Activated B cell treated with CpG ODN at 0.5 μM for 24 hours (primary cell): ENCODE measurements at regions of chr15 and their contacts with region 1.

Region 1: DNA sequence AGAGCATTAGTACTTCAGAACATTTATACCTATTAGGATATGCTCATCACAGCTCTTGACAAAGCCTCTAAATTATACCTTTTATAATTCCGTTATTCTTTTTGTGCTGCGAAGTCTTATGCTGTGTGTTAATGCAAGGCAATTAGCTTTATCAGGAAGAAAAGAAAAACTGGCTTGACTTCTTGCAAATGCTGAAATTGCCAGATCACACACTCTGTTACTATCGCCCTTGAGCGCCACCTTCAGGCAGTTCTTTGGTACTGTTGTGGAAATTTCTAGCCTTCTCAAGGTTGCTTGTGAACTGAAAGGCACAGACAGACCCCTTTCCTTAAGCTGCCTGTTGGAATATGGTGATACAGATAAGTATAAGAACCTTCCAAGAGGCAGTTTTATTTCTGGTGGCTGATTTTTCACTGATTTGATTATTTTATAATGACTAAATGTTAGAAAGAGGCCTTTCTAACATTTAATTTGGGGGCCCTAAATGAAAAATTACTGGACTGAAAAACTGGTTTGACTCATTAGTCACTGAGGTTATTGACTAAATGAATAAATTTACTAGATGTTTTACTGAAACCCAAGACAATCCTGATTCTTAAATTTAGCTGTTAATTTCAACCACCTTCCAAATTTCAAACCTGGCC is 126.2 kb upstream of the RASGRP1 start:
- DNase-seq: peak; percentile 38
- ATAC-seq: peak; percentile 89
- H3K4me3 Mint-ChIP-seq: no peak overlapping the region
- H3K27ac Mint-ChIP-seq: no peak overlapping the region
- H3K4me1 Mint-ChIP-seq: peaks cover 14% of the 10 kb centered on the region
- H3K27me3 Mint-ChIP-seq: no peaks in the 10 kb centered on the region
- CTCF ChIP-seq: no peak

Region 2: GRCh38 chr15:37973856-37974255 is 717.0 kb before region 1 on chr15:
- CTCF ChIA-PET with region 1: no interaction called
- POLR2A ChIA-PET with region 1: no interaction called
- intact Hi-C with region 1: no loop called
- DNase-seq: no peak
- ATAC-seq: no peak
- H3K4me3 Mint-ChIP-seq: no peak overlapping the region
- H3K27ac Mint-ChIP-seq: no peak overlapping the region
- H3K4me1 Mint-ChIP-seq: no peaks in the 10 kb centered on the region
- H3K27me3 Mint-ChIP-seq: peaks cover 5% of the 10 kb centered on the region
- CTCF ChIP-seq: no peak

Region 3: DNA sequence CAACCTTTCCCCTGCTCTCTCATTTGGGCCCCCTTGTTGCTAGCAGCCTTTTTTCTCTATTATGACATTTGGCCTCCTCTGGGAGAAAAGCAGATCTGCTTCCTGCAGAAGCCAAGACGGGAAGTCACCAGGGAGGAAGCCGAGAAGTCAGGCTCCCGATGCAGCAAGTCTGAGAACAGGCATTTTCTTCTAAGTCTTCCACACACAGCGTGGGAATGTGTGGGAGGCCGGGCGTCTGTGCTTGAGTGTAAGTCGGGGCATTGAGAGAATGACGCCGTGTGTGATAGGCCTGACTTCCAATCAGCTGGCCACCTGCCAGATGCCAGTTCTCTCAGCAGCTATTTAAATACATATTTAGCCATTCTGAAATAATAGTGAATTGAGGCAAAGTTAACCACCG is 312.6 kb before region 1 on chr15:
- CTCF ChIA-PET with region 1: no interaction called
- POLR2A ChIA-PET with region 1: no interaction called
- intact Hi-C with region 1: no loop called
- DNase-seq: no peak
- ATAC-seq: no peak
- H3K4me3 Mint-ChIP-seq: no peak overlapping the region
- H3K27ac Mint-ChIP-seq: no peak overlapping the region
- H3K4me1 Mint-ChIP-seq: no peaks in the 10 kb centered on the region
- H3K27me3 Mint-ChIP-seq: peaks cover 29% of the 10 kb centered on the region
- CTCF ChIP-seq: no peak

Region 4: GRCh38 chr15:38474155-38474757 is 216.6 kb before region 1 on chr15:
- CTCF ChIA-PET with region 1: interaction called, 84 read pairs
- POLR2A ChIA-PET with region 1: no interaction called
- intact Hi-C with region 1: loop called (anchors 1 kb)
- DNase-seq: no peak
- ATAC-seq: peak; percentile 100
- H3K4me3 Mint-ChIP-seq: no peak overlapping the region
- H3K27ac Mint-ChIP-seq: no peak overlapping the region
- H3K4me1 Mint-ChIP-seq: no peaks in the 10 kb centered on the region
- H3K27me3 Mint-ChIP-seq: no peaks in the 10 kb centered on the region
- CTCF ChIP-seq: no peak